Activated CD4-positive, alpha-beta T cell treated with anti-CD3 and anti-CD28 coated beads for 36 hours (primary cell): ENCODE measurements at regions of chr5 and their contacts with region 1.

Region 1: DNA sequence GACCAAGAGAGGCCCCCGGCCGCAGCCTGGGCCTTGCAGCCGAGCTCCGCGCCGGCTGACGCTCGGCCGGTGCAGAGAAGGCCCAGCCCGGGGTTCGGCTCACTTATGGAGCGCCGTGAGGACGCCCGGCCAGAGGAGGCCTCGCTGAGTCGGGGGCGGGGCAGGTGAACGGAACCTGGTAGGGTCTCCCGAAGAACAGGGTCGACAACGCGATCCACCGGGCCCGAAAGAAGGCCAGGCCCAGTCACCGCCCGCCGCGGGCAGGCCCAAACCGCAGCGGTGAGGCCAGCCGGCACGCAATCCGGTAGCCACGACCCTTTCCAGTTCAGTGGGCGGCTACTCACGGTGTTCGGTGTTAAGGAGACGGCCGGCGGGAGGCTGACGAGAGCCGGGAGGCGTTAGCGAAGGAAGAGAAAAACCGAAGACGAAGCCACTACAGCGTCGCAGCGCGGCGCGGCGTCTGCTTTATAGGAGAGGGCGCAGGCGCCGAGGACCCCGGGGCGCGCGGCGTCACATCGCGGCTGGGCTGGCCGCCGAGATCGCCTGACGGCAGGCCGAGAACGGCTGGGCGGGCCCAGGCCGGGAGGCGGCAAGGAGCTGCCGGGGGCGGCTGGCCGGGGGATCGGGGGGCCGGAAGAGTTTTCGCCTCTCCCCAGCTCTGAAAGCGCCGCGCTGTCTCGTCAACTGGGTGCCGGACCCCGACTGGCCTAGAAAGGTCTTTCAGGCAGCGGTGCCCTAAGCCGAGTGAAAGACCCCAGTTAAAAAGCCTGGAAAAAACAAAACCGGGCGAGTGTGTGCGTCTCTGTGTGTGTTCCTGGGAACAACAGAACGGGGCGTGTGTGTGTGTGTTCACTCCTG is at the start of gene SKP1:
- DNase-seq: peak; percentile 91
- ATAC-seq: peak; percentile 85
- H3K4me3 Mint-ChIP-seq: peak within 1 kb of the TSS; percentile 98
- H3K27ac Mint-ChIP-seq: peak within 1 kb of the TSS; percentile 95
- H3K4me1 Mint-ChIP-seq: peaks cover 32% of the 10 kb centered on the region
- H3K27me3 Mint-ChIP-seq: no peaks in the 10 kb centered on the region
- total RNA-seq, gene SKP1: 218 to 265 TPM

Region 2: GRCh38 chr5:133968049-133968980 is 208.4 kb before region 1 on chr5 and contains the start of gene C5orf15:
- CTCF ChIA-PET with region 1: no interaction called
- POLR2A ChIA-PET with region 1: no interaction called
- intact Hi-C with region 1: loop called in 1 of 2 experiments (anchors 1 kb)
- DNase-seq: peak; percentile 97
- ATAC-seq: peak; percentile 97
- H3K4me3 Mint-ChIP-seq: peak within 1 kb of the TSS; percentile 94
- H3K27ac Mint-ChIP-seq: peak within 1 kb of the TSS; percentile 90
- H3K4me1 Mint-ChIP-seq: peaks cover 51% of the 10 kb centered on the region
- H3K27me3 Mint-ChIP-seq: no peaks in the 10 kb centered on the region
- total RNA-seq, gene C5orf15: 28.7 to 38.7 TPM

Region 3: DNA sequence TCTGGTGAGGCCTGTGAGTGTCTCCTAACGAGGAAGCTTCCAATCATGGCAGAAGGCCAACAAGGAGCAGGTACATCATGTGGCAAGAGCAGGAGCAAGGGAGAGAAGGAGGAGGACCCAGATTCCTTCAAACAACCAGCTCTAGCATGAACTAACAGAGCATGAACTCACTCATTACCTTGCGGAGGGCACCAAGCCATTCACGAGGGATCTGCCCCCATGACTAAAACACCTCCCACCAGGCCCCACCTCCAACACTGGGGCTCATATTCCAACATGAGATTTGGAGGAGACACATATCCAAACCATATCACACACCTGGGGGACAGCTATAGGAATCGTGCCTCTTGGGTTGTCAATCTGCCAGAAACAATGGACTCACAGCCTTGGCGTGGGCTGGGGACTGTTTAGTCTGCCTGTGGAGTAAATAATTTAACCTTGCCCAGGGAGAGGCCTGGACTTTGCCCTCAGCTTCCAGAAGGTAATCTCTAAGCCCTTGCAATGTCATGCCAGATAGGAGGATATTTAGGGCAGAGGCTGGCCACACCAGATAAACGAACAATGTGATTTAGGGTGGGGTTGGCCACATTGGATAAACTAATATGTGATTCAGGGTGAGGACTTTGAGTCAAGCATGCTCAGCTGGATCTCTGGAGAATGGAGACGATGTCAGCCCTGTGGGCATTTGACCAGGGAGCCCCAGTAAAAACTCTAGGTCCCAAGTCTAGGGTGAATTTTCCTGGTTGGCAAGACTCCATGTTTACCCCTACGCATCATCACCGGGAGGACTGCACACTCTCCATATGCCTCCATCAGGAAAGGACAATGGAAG is 158.4 kb before region 1 on chr5:
- CTCF ChIA-PET with region 1: no interaction called
- POLR2A ChIA-PET with region 1: no interaction called
- intact Hi-C with region 1: no loop called
- DNase-seq: no peak
- ATAC-seq: no peak
- H3K4me3 Mint-ChIP-seq: no peak overlapping the region
- H3K27ac Mint-ChIP-seq: no peak overlapping the region
- H3K4me1 Mint-ChIP-seq: no peaks in the 10 kb centered on the region
- H3K27me3 Mint-ChIP-seq: no peaks in the 10 kb centered on the region

Region 4: GRCh38 chr5:134161513-134162395 is 15.0 kb before region 1 on chr5:
- CTCF ChIA-PET with region 1: interaction called, 10 read pairs
- POLR2A ChIA-PET with region 1: interaction called, 10 read pairs
- intact Hi-C with region 1: no loop called
- DNase-seq: no peak
- ATAC-seq: peak; percentile 82
- H3K4me3 Mint-ChIP-seq: no peak overlapping the region
- H3K27ac Mint-ChIP-seq: peak overlapping the region; percentile 60
- H3K4me1 Mint-ChIP-seq: peaks cover 43% of the 10 kb centered on the region
- H3K27me3 Mint-ChIP-seq: no peaks in the 10 kb centered on the region

Region 5: GRCh38 chr5:134873987-134874830 is 697.5 kb after region 1 on chr5 and contains the start of gene TXNDC15:
- CTCF ChIA-PET with region 1: no interaction called
- POLR2A ChIA-PET with region 1: no interaction called
- intact Hi-C with region 1: no loop called
- DNase-seq: peak; percentile 90
- ATAC-seq: peak; percentile 83
- H3K4me3 Mint-ChIP-seq: peak within 1 kb of the TSS; percentile 88
- H3K27ac Mint-ChIP-seq: peak within 1 kb of the TSS; percentile 97
- H3K4me1 Mint-ChIP-seq: peaks cover 37% of the 10 kb centered on the region
- H3K27me3 Mint-ChIP-seq: no peaks in the 10 kb centered on the region
- total RNA-seq, gene TXNDC15: 16.6 to 29.1 TPM